ENCODE measurements at regions of chr7 and their contacts with region 1.

Region 1: DNA sequence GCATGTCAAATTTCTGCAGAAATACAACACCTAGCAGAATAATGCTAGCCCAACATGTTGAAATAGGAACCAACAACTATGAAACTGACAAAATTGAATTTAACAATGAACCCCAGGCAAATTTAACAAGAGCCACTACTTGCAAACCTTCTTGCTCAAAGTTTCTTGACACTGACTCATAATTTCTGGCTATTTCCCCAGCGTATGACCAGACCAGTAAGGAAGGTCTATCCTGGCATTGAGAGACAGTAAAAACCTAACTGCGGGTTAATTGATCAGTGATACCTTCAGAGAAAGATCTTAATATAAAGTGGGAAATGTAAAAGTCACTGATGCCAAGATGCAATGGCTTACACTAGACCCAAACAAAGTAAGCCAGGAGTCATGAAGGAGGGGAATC is 510.1 kb downstream of the ARL4A start:
- DNase-seq: no peak
- ATAC-seq: no peak
- H3K4me3 ChIP-seq: no peak overlapping the region
- H3K4me3 Mint-ChIP-seq: no peak overlapping the region
- H3K27ac ChIP-seq: no peak overlapping the region
- H3K27ac Mint-ChIP-seq: no peak overlapping the region
- H3K4me1 ChIP-seq: no peaks in the 10 kb centered on the region
- H3K4me1 Mint-ChIP-seq: no peaks in the 10 kb centered on the region
- H3K27me3 ChIP-seq: no peaks in the 10 kb centered on the region
- H3K27me3 Mint-ChIP-seq: no peaks in the 10 kb centered on the region
- CTCF ChIP-seq: no peak

Region 2: DNA sequence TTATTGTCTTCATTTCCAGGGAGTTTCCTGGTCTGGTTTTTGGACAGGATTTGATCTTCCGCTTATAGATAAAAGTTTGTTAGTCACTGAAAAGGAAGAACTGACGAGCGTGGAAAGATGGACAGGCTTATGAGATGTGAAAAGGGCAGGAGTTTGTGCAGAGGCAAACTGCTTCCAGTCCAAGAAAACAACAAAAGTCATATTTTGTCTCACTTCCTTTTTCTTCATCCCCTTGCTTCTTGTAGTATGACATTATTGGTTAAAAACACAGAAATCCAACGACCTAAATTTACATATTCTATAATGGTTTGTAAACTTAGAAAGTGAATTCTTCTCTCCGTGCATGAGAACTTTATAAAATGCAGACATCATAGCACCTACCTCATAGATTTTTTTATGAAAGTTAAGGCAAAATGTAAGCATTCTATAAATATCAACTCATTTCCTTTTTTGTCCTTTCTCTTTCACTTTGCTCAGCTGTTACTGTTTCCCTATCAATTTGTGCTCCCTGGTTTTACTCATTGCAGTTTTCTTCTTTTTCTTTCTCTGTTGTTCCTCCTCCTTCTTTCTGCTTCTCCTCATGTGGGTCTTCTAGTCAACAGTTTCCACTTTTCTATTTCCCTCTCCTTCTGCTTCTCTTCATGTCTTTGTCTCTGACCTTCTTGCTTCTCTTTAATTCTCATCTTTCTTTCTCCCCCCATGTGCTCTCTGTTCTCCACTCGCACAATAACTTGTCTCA is 139.9 kb before region 1 on chr7:
- CTCF ChIA-PET with region 1: no interaction called
- POLR2A ChIA-PET with region 1: no interaction called
- intact Hi-C with region 1: loop called in 1 of 2 experiments (anchors 5 kb)
- DNase-seq: peak in 1 of 9 experiments; percentile 2
- ATAC-seq: no peak
- H3K4me3 ChIP-seq: no peak overlapping the region
- H3K4me3 Mint-ChIP-seq: peak overlapping the region; percentile 42
- H3K27ac ChIP-seq: no peak overlapping the region
- H3K27ac Mint-ChIP-seq: no peak overlapping the region
- H3K4me1 ChIP-seq: peaks cover 3% of the 10 kb centered on the region
- H3K4me1 Mint-ChIP-seq: peaks cover 12% of the 10 kb centered on the region
- H3K27me3 ChIP-seq: no peaks in the 10 kb centered on the region
- H3K27me3 Mint-ChIP-seq: peaks cover 2% of the 10 kb centered on the region
- CTCF ChIP-seq: no peak

Region 3: DNA sequence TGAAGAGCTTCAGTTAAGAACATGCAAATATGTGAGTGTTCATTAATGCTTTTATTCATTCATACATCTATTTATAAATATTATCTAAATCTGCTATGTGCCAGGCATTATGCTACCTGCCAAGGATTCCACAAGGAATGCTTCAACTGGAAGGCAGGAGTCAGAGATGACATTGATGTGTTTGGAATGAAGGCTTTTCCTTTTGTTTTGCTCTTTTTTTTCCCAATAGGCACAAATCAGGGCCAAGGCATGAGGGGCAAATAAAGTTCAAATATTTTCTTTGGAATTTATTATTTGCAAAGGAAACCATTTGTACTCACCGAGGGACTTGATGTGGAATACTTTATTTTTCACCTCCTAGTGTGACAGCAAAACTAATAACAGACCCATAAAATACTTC is 20.3 kb after region 1 on chr7:
- CTCF ChIA-PET with region 1: no interaction called
- POLR2A ChIA-PET with region 1: no interaction called
- intact Hi-C with region 1: no loop called
- DNase-seq: no peak
- ATAC-seq: no peak
- H3K4me3 ChIP-seq: no peak overlapping the region
- H3K4me3 Mint-ChIP-seq: no peak overlapping the region
- H3K27ac ChIP-seq: no peak overlapping the region
- H3K27ac Mint-ChIP-seq: no peak overlapping the region
- H3K4me1 ChIP-seq: no peaks in the 10 kb centered on the region
- H3K4me1 Mint-ChIP-seq: no peaks in the 10 kb centered on the region
- H3K27me3 ChIP-seq: no peaks in the 10 kb centered on the region
- H3K27me3 Mint-ChIP-seq: no peaks in the 10 kb centered on the region
- CTCF ChIP-seq: no peak

Measured in CD8-positive, alpha-beta T cell (primary cell).